ENCODE measurements at regions of chr18 and their contacts with region 1.

Region 1: GRCh38 chr18:12639990-12640880 is 17.7 kb downstream of the SPIRE1 start:
- DNase-seq: no peak
- ATAC-seq: peak; percentile 58; the same call in 1 of the 2 replicates
- H3K4me3 ChIP-seq: no peak overlapping the region
- H3K27ac ChIP-seq: peak overlapping the region; percentile 34; the same call in 1 of the 2 replicates
- H3K4me1 ChIP-seq: peaks cover 21 to 43% of the 10 kb centered on the region in 2 experiments
- H3K27me3 ChIP-seq: no peaks in the 10 kb centered on the region
- CTCF ChIP-seq: no peak
- POLR2A ChIP-seq: no peak
- RAD21 ChIP-seq: no peak

Region 2: DNA sequence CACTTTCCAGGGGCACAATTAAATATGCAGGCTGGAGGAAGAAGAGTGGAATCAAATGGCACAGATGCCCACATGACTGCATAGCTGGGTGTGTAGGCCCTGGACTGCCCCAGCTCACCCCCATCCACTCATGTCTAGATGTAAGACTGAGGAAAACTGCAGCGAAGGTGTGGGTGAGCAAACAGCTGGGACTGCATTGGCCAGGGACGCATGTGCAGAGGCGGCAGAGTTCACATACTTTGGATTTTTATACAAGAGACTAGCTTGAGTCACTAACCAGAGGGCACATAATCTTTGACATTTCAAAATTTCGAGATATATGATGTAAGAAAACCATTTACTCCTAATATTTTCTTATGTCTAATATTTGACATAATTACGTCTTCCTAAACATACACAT is 42.5 kb before region 1 on chr18:
- CTCF ChIA-PET with region 1: no interaction called
- POLR2A ChIA-PET with region 1: no interaction called
- RAD21 ChIA-PET with region 1: no interaction called
- intact Hi-C with region 1: loop called (anchors 5 kb)
- DNase-seq: peak; percentile 47
- ATAC-seq: peak; percentile 80
- H3K4me3 ChIP-seq: no peak overlapping the region
- H3K27ac ChIP-seq: peak overlapping the region; percentile 20; the same call in 1 of the 2 replicates
- H3K4me1 ChIP-seq: peaks cover 38 to 39% of the 10 kb centered on the region in 2 experiments
- H3K27me3 ChIP-seq: no peaks in the 10 kb centered on the region
- CTCF ChIP-seq: no peak
- POLR2A ChIP-seq: no peak
- RAD21 ChIP-seq: no peak

Region 3: DNA sequence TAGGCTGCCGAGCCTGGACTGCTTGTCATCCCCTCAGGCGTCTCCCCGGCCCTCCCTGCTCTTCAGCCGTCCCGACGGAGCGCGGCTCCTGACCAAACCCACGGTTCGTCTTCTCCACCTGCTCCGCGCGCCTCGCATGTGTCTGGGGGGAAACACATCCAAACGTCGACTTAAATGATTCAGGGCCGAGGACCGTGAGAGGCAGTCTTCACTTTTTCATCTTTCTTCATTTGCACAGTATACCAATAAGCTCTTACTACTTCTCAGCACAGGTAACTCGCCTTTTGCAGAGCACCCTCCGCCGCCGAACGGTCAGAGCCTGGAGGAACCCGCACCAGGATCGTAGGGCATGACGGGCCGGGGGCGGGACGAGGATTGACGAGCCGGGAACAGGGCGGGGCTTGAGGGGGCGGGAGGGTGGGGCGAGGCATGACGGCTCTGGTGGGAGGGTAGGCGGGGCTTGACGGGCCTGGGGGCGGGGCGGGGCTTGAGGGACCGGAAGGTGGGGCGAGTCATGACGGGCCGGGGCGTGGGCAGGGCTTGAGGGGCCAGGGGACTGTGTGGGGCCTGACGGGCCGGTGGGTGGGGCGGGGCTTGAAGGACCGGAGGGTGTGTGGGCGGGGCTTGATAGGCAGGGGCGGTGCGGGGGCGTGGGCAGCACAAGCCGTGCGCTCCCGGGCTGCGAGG is 307.3 kb after region 1 on chr18 and contains the start of gene SEH1L:
- CTCF ChIA-PET with region 1: no interaction called
- POLR2A ChIA-PET with region 1: no interaction called
- RAD21 ChIA-PET with region 1: no interaction called
- intact Hi-C with region 1: no loop called
- DNase-seq: peak; percentile 93
- ATAC-seq: peak; percentile 89
- H3K4me3 ChIP-seq: peak within 1 kb of the TSS; percentile 71 to 86
- H3K27ac ChIP-seq: peak within 1 kb of the TSS; percentile 92
- H3K4me1 ChIP-seq: peaks cover 11 to 23% of the 10 kb centered on the region in 2 experiments; a peak in 3 of 4 replicates
- H3K27me3 ChIP-seq: no peaks in the 10 kb centered on the region
- CTCF ChIP-seq: no peak
- POLR2A ChIP-seq: peak; percentile 78
- RAD21 ChIP-seq: no peak; the same call in 1 of the 2 replicates
- total RNA-seq, gene SEH1L: 83.7 TPM

Region 4: GRCh38 chr18:12960853-12961397 is 320.7 kb after region 1 on chr18:
- CTCF ChIA-PET with region 1: no interaction called
- POLR2A ChIA-PET with region 1: no interaction called
- RAD21 ChIA-PET with region 1: no interaction called
- intact Hi-C with region 1: no loop called
- DNase-seq: no peak
- ATAC-seq: no peak
- H3K4me3 ChIP-seq: no peak overlapping the region
- H3K27ac ChIP-seq: no peak overlapping the region
- H3K4me1 ChIP-seq: no peaks in the 10 kb centered on the region
- H3K27me3 ChIP-seq: no peaks in the 10 kb centered on the region
- CTCF ChIP-seq: no peak
- POLR2A ChIP-seq: no peak
- RAD21 ChIP-seq: no peak

Measured in HCT116 (cell line).